ENCODE measurements at regions of chr13 and their contacts with region 1.

Region 1: GRCh38 chr13:21476893-21477472 is 17.9 kb upstream of the ZDHHC20 start:
- DNase-seq: peak; percentile 95
- H3K4me3 Mint-ChIP-seq: peak overlapping the region; percentile 86
- H3K27ac Mint-ChIP-seq: peak overlapping the region; percentile 78
- H3K4me1 Mint-ChIP-seq: peaks cover 10% of the 10 kb centered on the region
- H3K27me3 Mint-ChIP-seq: peaks cover 3% of the 10 kb centered on the region

Region 2: DNA sequence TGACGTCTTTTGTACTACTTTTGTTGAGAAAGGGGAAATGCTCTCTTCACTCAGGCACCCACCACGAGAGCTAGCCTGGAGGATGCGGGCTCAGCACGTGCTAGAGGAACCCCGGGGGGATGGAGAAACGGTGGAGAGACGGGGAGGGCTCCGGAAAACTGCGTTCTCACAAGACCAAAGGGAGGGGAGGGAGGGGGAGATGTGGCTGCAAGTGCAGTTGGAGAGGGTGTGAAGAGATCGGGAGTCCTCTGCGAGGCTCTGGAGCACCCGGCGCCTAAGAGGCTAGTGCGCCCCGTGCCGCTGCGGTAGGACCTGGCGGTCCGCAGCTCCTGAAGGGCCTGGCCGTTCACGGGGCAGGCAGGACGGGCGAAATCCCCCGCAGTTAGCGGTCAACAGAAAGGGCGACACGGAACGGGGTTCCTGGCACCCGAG is 531.0 kb before region 1 on chr13:
- intact Hi-C with region 1: loop called (anchors 1 kb)
- DNase-seq: no peak
- H3K4me3 Mint-ChIP-seq: peak overlapping the region; percentile 58
- H3K27ac Mint-ChIP-seq: peak overlapping the region; percentile 29
- H3K4me1 Mint-ChIP-seq: peaks cover 6% of the 10 kb centered on the region
- H3K27me3 Mint-ChIP-seq: peaks cover 42% of the 10 kb centered on the region

Region 3: DNA sequence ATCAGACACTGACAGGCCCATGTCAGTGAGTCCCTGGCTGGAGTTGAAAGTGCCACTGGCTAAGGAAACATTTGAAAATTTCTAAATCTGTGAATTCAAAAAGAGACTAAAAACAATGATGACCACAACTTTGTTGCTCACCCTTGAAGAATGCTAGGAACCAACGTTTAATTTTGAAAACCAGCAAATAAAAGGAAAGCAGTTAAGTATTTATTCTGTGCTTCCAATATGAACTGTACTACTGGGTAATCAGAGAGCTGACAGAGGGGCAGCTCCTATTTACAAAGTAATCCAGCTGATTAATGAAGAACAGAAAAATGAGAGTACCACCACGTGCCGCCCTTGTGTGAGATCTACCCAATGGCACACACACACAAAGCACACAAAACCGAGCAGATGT is 370.9 kb before region 1 on chr13:
- intact Hi-C with region 1: loop called (anchors 1 kb)
- DNase-seq: no peak
- H3K4me3 Mint-ChIP-seq: no peak overlapping the region
- H3K27ac Mint-ChIP-seq: no peak overlapping the region
- H3K4me1 Mint-ChIP-seq: no peaks in the 10 kb centered on the region
- H3K27me3 Mint-ChIP-seq: no peaks in the 10 kb centered on the region

Region 4: DNA sequence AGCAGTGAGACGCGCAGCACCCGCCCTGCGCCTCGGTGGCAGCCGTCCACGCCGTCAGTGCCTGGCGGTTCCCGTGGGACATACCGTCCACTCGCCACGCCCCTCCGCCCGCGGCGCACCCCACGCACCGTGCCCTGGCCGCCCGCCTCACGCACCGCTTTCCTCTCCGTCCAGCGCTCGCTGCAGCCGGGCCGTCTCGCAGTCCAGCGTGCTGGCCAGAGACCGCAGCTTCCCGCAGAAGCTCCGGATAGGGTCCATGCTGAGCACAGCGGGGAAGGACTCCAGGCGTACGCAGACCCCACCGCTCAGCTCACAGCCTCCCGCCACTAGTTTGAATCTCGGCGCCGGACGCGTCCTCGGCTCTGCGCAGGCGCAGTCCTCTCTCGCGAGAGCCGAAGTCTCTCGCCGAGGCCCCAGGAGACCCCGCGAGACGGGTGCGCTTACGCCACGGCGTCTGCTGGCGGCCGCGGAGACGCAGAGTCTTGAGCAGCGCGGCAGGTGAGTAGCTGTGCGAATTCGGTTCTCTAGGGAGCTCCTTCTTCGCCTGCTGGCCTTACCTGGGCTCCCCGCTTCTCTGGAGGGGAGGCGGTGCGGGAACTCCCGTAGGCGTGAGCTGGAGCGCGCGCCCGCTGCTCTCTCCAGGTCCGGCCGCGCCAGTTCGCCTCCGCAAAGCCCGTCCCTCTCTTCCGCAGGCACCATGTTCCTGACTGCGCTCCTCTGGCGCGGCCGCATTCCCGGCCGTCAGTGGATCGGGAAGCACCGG is 300.6 kb before region 1 on chr13 and contains the starts of genes MRPL57 and SKA3:
- intact Hi-C with region 1: loop called (anchors 2 kb)
- DNase-seq: peak; percentile 99
- H3K4me3 Mint-ChIP-seq: peak within 1 kb of the TSS; percentile 99
- H3K27ac Mint-ChIP-seq: peak within 1 kb of the TSS; percentile 98
- H3K4me1 Mint-ChIP-seq: peaks cover 23% of the 10 kb centered on the region
- H3K27me3 Mint-ChIP-seq: no peaks in the 10 kb centered on the region
- total RNA-seq, gene MRPL57: 32.7 and 33.0 TPM in 2 replicates
- total RNA-seq, gene SKA3: 35.6 and 39.6 TPM in 2 replicates

Region 5: GRCh38 chr13:21389124-21389523 is 87.9 kb before region 1 on chr13:
- intact Hi-C with region 1: loop called (anchors 5 kb)
- DNase-seq: no peak
- H3K4me3 Mint-ChIP-seq: no peak overlapping the region
- H3K27ac Mint-ChIP-seq: no peak overlapping the region
- H3K4me1 Mint-ChIP-seq: peaks cover 4% of the 10 kb centered on the region
- H3K27me3 Mint-ChIP-seq: no peaks in the 10 kb centered on the region

Measured in activated CD4-positive, alpha-beta T cell treated with anti-CD3 and anti-CD28 coated beads, Interleukin-2, amount 10 ng/mL, durations not matched to agents 24 days and 14 days (primary cell).